B cell (primary cell): ENCODE measurements at regions of chr10 and their contacts with region 1.

Region 1: DNA sequence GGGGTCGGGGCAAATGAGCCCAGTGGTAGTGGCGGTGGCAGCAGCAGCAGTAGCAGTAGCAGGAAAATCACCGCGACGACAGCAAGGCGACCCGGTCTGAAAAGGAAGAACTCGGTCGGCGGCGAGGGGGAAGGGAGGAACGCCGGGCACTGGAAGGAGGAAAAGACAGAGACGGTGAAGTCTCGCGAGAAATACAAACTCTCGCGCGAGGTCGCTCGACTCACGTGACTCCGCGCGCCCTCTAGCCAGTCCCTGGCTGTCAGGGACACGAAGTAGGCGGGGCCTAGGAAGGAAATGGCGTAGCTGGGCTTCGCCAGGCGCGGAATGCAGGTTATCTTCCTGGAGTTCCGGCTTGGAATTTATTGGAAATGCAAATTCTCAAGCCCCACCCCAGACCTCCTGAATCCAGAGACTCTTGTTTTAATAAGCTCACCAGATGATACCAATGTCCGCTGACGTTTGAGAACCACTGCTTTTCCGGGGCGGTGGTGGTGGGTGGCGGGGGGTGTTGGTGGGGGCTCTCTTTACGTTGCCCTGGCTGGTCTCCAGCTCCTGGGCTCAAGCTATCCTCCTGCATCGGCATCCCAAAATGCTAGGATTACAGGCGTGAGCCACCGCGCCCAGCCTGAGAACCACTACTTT is at the start of gene SMNDC1:
- DNase-seq: peak; percentile 98
- ATAC-seq: peak; percentile 93
- H3K4me3 ChIP-seq: peak within 1 kb of the TSS; percentile 64 to 89 (median 79)
- H3K4me3 Mint-ChIP-seq: peak within 1 kb of the TSS; percentile 98
- H3K27ac ChIP-seq: peak within 1 kb of the TSS; percentile 76 to 91
- H3K27ac Mint-ChIP-seq: peak within 1 kb of the TSS; percentile 99
- H3K4me1 ChIP-seq: peaks cover 20 to 24% of the 10 kb centered on the region in 2 donors
- H3K4me1 Mint-ChIP-seq: peaks cover 43% of the 10 kb centered on the region
- H3K27me3 ChIP-seq: no peaks in the 10 kb centered on the region
- H3K27me3 Mint-ChIP-seq: no peaks in the 10 kb centered on the region
- CTCF ChIP-seq: no peak
- total RNA-seq, gene SMNDC1: 34.4 and 36.0 TPM in 2 replicates

Region 2: DNA sequence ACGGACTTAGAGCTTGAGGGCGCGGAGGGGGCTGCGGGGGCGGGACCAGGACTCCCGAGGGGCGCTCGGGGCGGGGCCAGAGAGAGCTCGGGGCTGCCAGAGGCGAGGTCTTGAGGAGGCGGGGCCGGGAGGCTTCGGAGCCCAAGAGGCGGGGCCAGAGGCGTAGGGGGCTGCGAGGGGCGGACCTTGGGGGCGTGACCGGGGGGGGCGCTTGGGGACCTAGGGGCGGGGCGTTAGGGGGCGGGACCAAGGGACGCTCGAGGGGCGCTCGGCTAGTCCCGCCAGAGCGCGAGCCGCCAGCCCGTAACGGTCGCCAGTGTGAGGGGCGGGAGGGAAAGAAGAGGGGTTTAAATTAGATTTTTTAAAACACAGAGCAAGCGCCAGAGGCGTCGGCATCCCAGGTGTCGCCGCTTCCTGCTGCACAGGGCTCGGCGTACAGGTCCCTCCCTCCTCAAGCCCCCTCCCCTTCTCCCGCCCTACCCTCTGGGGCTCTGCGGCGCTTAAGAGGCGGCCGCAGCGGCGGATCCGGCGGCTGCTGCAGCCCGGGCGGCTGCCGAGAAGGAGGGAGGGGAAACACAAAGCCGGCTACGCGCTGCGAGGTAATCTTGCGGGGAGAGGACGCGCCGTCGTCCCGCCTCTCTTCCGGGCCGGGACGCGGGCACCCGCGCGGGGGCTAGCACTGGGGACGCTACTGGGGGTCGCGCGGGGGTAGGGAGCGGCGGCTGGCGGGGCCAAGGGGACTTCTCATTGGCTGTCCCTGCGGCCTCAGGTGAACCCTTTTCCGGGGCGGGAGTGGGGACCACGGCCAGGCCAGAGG is 297.0 kb before region 1 on chr10 and contains the start of gene ADD3:
- CTCF ChIA-PET with region 1: no interaction called
- POLR2A ChIA-PET with region 1: no interaction called
- intact Hi-C with region 1: loop called (anchors 2 kb)
- DNase-seq: peak; percentile 95
- ATAC-seq: peak; percentile 86
- H3K4me3 ChIP-seq: peak within 1 kb of the TSS; percentile 73 to 95 (median 76)
- H3K4me3 Mint-ChIP-seq: no peak within 1 kb of the TSS
- H3K27ac ChIP-seq: peak within 1 kb of the TSS; percentile 72 to 91
- H3K27ac Mint-ChIP-seq: no peak within 1 kb of the TSS
- H3K4me1 ChIP-seq: peaks cover 33 to 40% of the 10 kb centered on the region in 2 donors
- H3K4me1 Mint-ChIP-seq: peaks cover 49% of the 10 kb centered on the region
- H3K27me3 ChIP-seq: no peaks in the 10 kb centered on the region
- H3K27me3 Mint-ChIP-seq: no peaks in the 10 kb centered on the region
- CTCF ChIP-seq: no peak
- total RNA-seq, gene ADD3: 156 and 191 TPM in 2 replicates

Region 3: GRCh38 chr10:110225756-110226542 is 79.0 kb before region 1 on chr10:
- CTCF ChIA-PET with region 1: interaction called, 4 read pairs
- POLR2A ChIA-PET with region 1: interaction called, 3 read pairs
- intact Hi-C with region 1: loop called (anchors 1 kb)
- DNase-seq: peak; percentile 95
- ATAC-seq: peak; percentile 53
- H3K4me3 ChIP-seq: peak overlapping the region; percentile 42 to 90 (median 77)
- H3K4me3 Mint-ChIP-seq: peak overlapping the region; percentile 97
- H3K27ac ChIP-seq: peak overlapping the region; percentile 79 to 84
- H3K27ac Mint-ChIP-seq: peak overlapping the region; percentile 97
- H3K4me1 ChIP-seq: peaks cover 22 to 25% of the 10 kb centered on the region in 2 donors
- H3K4me1 Mint-ChIP-seq: peaks cover 38% of the 10 kb centered on the region
- H3K27me3 ChIP-seq: peaks cover 0 to 5% (median 2%) of the 10 kb centered on the region in 4 experiments
- H3K27me3 Mint-ChIP-seq: peaks cover 3% of the 10 kb centered on the region
- CTCF ChIP-seq: peak; percentile 65

Region 4: GRCh38 chr10:110285501-110285900 is 19.4 kb before region 1 on chr10:
- CTCF ChIA-PET with region 1: no interaction called
- POLR2A ChIA-PET with region 1: no interaction called
- intact Hi-C with region 1: no loop called
- DNase-seq: no peak
- ATAC-seq: no peak
- H3K4me3 ChIP-seq: no peak overlapping the region
- H3K4me3 Mint-ChIP-seq: no peak overlapping the region
- H3K27ac ChIP-seq: no peak overlapping the region
- H3K27ac Mint-ChIP-seq: no peak overlapping the region
- H3K4me1 ChIP-seq: peaks cover 0 to 6% of the 10 kb centered on the region in 2 donors
- H3K4me1 Mint-ChIP-seq: peaks cover 11% of the 10 kb centered on the region
- H3K27me3 ChIP-seq: no peaks in the 10 kb centered on the region
- H3K27me3 Mint-ChIP-seq: no peaks in the 10 kb centered on the region
- CTCF ChIP-seq: no peak

Region 5: DNA sequence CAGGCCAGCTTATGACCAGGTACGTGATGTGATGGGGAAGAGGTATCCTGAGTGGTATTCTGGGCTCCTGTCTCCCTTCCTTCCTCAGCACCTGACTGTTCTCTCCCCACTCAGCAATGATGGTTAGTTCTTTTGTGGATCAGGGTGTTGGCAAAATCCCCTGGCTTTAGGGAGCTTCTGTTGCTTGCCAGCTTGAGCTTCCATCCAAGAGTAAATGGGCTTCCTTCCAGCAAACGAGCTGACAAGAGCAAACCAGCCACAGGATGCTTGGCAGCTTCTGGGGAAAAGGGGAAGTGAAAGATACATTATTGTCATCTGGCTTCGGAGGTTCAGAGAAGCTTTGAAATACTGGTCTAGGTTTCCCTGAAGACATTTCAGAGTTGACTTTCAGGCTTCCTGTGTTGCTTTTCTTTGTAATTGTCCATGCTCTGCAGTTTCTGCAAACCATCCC is 198.0 kb after region 1 on chr10:
- CTCF ChIA-PET with region 1: interaction called, 5 read pairs
- POLR2A ChIA-PET with region 1: interaction called, 14 read pairs
- intact Hi-C with region 1: loop called (anchors 1 kb)
- DNase-seq: peak; percentile 87
- ATAC-seq: peak; percentile 51
- H3K4me3 ChIP-seq: peak overlapping the region in 1 of 5 experiments; percentile 45
- H3K4me3 Mint-ChIP-seq: peak overlapping the region; percentile 85
- H3K27ac ChIP-seq: peak overlapping the region; percentile 82 to 87
- H3K27ac Mint-ChIP-seq: peak overlapping the region; percentile 90
- H3K4me1 ChIP-seq: peaks cover 54 to 63% of the 10 kb centered on the region in 2 donors
- H3K4me1 Mint-ChIP-seq: peaks cover 67% of the 10 kb centered on the region
- H3K27me3 ChIP-seq: peaks cover 0 to 11% (median 2%) of the 10 kb centered on the region in 4 experiments
- H3K27me3 Mint-ChIP-seq: peaks cover 6% of the 10 kb centered on the region
- CTCF ChIP-seq: no peak

Region 6: DNA sequence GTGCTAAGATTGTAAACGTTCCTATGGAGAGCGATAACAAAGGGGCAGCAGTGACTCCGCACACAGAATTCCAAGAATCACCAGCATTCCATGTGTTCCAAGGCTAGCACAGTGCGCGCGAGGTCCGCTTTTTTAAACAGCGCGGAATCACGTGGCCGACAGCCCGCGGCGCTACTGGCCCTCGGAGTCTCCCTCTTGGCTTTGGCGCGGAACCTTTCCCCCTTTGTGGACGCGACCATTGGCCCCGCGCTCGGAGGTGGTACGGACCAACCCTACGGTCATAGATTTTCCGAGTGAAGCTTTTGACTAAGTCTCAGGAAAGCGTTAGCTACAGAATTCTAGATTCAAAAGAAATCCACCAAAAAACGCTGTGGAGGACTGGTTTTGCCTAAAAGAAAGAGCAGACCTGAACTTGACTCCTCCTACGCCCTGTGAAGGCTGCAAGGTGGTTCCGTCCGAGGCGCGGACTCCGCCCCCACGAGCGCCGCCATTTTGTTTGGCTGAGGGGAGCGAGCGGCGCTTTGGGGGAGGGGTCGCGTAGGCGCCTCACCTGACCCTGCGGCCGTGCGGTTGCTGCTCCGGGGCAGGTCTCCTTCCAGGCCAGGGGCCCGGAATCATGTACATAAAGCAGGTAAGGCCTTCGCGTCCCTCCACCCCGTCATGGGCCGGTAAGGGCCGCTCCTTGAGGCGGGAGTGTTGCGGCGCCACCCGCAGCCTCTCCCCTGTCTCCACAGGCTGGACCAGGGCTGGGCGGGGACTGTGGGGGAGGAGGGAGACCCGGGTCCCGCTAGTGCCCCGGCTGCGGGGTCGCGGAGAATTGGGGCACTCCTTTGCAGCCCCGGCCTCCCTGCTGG is 262.5 kb after region 1 on chr10 and contains the start of gene SMC3:
- CTCF ChIA-PET with region 1: interaction called, 26 read pairs
- POLR2A ChIA-PET with region 1: interaction called, 3 read pairs
- intact Hi-C with region 1: loop called (anchors 1 kb)
- DNase-seq: peak; percentile 98
- ATAC-seq: peak; percentile 89
- H3K4me3 ChIP-seq: peak within 1 kb of the TSS; percentile 82 to 92 (median 90)
- H3K4me3 Mint-ChIP-seq: peak within 1 kb of the TSS; percentile 91
- H3K27ac ChIP-seq: peak within 1 kb of the TSS; percentile 73 to 90
- H3K27ac Mint-ChIP-seq: peak within 1 kb of the TSS; percentile 98
- H3K4me1 ChIP-seq: peaks cover 24 to 27% of the 10 kb centered on the region in 2 donors
- H3K4me1 Mint-ChIP-seq: peaks cover 31% of the 10 kb centered on the region
- H3K27me3 ChIP-seq: peaks cover 0 to 8% (median 5%) of the 10 kb centered on the region in 4 experiments
- H3K27me3 Mint-ChIP-seq: peaks cover 5% of the 10 kb centered on the region
- CTCF ChIP-seq: no peak
- total RNA-seq, gene SMC3: 44.6 and 45.8 TPM in 2 replicates

Region 7: DNA sequence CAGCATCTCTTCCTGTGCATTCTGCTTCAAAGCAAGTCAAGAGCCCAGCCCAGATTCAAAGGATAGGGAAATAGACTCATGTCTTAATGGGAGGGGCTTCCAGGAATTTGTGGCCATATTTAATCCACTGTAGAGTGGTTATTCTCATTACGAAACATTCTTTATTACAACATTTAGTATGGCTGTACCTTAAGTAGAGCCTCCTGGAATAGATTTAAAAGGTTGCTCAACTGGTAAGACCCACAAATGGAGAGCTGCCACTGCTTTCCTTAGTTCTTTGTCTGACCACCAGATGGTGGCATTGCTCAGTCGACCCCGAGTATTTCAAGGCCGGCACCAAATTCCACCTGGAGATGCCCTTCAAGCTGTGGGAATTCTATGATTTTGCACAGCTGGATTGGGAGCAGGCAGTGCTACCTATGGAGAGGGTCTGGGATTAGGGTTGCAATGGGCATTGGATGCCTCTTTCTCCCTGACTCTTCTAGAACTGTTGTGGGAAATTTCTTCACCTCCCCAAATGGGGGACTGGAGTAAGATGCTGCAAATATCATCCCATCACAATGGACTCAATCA is 441.4 kb after region 1 on chr10:
- CTCF ChIA-PET with region 1: no interaction called
- POLR2A ChIA-PET with region 1: no interaction called
- intact Hi-C with region 1: loop called (anchors 10 kb)
- DNase-seq: peak; percentile 70
- ATAC-seq: peak; percentile 68
- H3K4me3 ChIP-seq: no peak overlapping the region
- H3K4me3 Mint-ChIP-seq: no peak overlapping the region
- H3K27ac ChIP-seq: no peak overlapping the region
- H3K27ac Mint-ChIP-seq: no peak overlapping the region
- H3K4me1 ChIP-seq: peaks cover 0 to 6% of the 10 kb centered on the region in 2 donors
- H3K4me1 Mint-ChIP-seq: peaks cover 3% of the 10 kb centered on the region
- H3K27me3 ChIP-seq: peaks cover 0 to 5% (median 0%) of the 10 kb centered on the region in 4 experiments
- H3K27me3 Mint-ChIP-seq: peaks cover 5% of the 10 kb centered on the region
- CTCF ChIP-seq: peak; percentile 96